HEK293T (cell line): ENCODE measurements at regions of chr5 and their contacts with region 1.

Region 1: GRCh38 chr5:76601470-76601869 is 21.7 kb downstream of the F2RL2 start:
- DNase-seq: peak; percentile 62

Region 2: GRCh38 chr5:76521240-76521758 is 80.2 kb before region 1 on chr5:
- CTCF ChIA-PET with region 1: no interaction called
- POLR2A ChIA-PET with region 1: no interaction called
- DNase-seq: no peak

Region 3: GRCh38 chr5:76582230-76583162 is 19.0 kb before region 1 on chr5:
- CTCF ChIA-PET with region 1: no interaction called
- POLR2A ChIA-PET with region 1: no interaction called
- DNase-seq: no peak

Region 4: DNA sequence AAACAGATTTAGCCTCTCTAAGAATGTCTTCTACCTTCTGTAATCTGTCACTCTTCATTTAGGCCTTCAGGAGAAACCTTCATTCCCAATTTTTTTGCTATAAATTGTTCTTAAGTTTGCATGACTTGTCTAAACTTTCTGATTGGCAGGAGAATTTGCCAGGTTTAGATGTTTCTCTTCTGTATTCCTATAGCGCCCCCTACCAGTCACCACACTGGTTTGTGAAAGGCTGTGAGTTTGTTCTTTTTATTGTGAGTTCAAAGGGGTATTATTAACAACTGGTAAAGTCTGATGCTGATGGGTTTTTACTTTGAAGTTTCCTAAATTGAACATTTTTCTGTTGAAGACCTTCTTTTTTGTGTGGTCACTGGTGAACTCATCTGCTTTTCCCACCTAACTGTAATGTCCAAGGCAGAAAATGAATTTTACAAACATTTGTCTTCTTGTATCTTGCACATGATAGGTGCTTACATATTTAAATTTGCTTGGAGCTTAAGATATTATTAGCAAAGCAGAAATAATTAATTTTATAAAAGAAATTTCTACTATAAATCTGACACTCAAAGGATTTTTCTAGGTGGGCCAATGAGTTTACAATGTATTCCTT is 40.1 kb after region 1 on chr5:
- CTCF ChIA-PET with region 1: interaction called, 10 read pairs
- POLR2A ChIA-PET with region 1: interaction called, 3 read pairs
- DNase-seq: peak; percentile 56

Region 5: DNA sequence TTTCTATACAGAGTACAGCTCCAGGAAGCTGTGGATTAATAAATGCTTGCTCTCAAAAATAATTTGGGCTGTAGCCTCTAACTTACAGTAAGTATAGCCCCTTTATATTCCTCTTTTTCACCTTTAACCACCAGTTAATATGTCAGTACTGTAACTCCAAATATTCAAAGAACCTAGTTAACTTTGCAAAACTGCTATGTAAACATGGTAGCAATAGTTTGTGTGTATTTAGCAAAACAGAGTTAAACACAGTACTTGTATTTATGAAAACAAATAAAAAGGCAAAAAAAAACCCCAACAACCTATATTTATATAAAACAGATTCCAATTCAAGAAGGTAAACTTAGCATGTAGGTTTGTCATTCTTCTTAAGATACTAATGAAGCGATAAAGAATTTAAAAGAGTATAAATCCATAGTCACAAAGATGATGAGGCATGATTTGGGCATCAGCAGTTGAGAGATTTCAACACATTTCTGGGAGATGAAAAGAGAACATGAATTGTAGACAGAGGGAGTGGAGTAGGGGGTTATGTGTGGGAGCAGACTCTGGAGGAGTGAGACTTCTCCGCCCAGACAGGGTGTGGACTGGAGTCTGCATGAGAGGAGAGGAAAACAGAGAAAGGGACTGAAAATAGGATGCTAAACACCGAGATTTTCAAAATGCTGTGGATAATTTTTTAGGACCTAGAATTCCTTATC is 170.4 kb after region 1 on chr5:
- CTCF ChIA-PET with region 1: interaction called, 25 read pairs
- POLR2A ChIA-PET with region 1: no interaction called
- DNase-seq: no peak